ENCODE measurements at regions of chr7 and their contacts with region 1.

Region 1: GRCh38 chr7:142060936-142061335 is 50.6 kb upstream of the MGAM2 start:
- DNase-seq: no peak
- H3K4me3 ChIP-seq: no peak overlapping the region
- H3K27ac ChIP-seq: no peak overlapping the region
- H3K27me3 ChIP-seq: peaks cover 0 to 35% (median 0%) of the 10 kb centered on the region in 45 donors
- CTCF ChIP-seq: no peak

Region 2: GRCh38 chr7:142088022-142088714 is 27.2 kb after region 1 on chr7:
- intact Hi-C with region 1: loop called (anchors 1 kb)
- DNase-seq: peak in 8 of 10 donors; percentile 3 to 80 (median 50)
- H3K4me3 ChIP-seq: no peak overlapping the region
- H3K27ac ChIP-seq: no peak overlapping the region
- H3K27me3 ChIP-seq: peaks cover 0 to 34% (median 0%) of the 10 kb centered on the region in 45 donors
- CTCF ChIP-seq: peak in 3 of 56 donors; percentile 8 to 15 (median 10)

Measured in dorsolateral prefrontal cortex (tissue), 120 donors.